Caco-2 (cell line): ENCODE measurements at regions of chr10 and their contacts with region 1.

Region 1: GRCh38 chr10:95430231-95430951 is 130.8 kb downstream of the SORBS1 start:
- DNase-seq: peak; percentile 69 to 76
- H3K4me3 ChIP-seq: no peak overlapping the region
- H3K4me3 Mint-ChIP-seq: no peak overlapping the region
- H3K27ac Mint-ChIP-seq: no peak overlapping the region
- H3K4me1 ChIP-seq: peaks cover 15% of the 10 kb centered on the region
- H3K4me1 Mint-ChIP-seq: no peaks in the 10 kb centered on the region
- H3K27me3 ChIP-seq: no peaks in the 10 kb centered on the region
- H3K27me3 Mint-ChIP-seq: no peaks in the 10 kb centered on the region
- CTCF ChIP-seq: peak; percentile 97 to 98

Region 2: GRCh38 chr10:94706089-94706488 is 724.3 kb before region 1 on chr10:
- CTCF ChIA-PET with region 1: no interaction called
- POLR2A ChIA-PET with region 1: no interaction called
- intact Hi-C with region 1: no loop called
- DNase-seq: no peak
- H3K4me3 ChIP-seq: no peak overlapping the region
- H3K4me3 Mint-ChIP-seq: no peak overlapping the region
- H3K27ac Mint-ChIP-seq: no peak overlapping the region
- H3K4me1 ChIP-seq: no peaks in the 10 kb centered on the region
- H3K4me1 Mint-ChIP-seq: no peaks in the 10 kb centered on the region
- H3K27me3 ChIP-seq: no peaks in the 10 kb centered on the region
- H3K27me3 Mint-ChIP-seq: no peaks in the 10 kb centered on the region
- CTCF ChIP-seq: no peak

Region 3: GRCh38 chr10:95133016-95133752 is 297.2 kb before region 1 on chr10:
- CTCF ChIA-PET with region 1: no interaction called
- POLR2A ChIA-PET with region 1: no interaction called
- intact Hi-C with region 1: loop called (anchors 10 kb)
- DNase-seq: peak; percentile 86 to 89
- H3K4me3 ChIP-seq: no peak overlapping the region
- H3K4me3 Mint-ChIP-seq: no peak overlapping the region
- H3K27ac Mint-ChIP-seq: peak overlapping the region; percentile 53
- H3K4me1 ChIP-seq: peaks cover 22% of the 10 kb centered on the region
- H3K4me1 Mint-ChIP-seq: peaks cover 22% of the 10 kb centered on the region
- H3K27me3 ChIP-seq: no peaks in the 10 kb centered on the region
- H3K27me3 Mint-ChIP-seq: no peaks in the 10 kb centered on the region
- CTCF ChIP-seq: peak; percentile 77 to 94

Region 4: DNA sequence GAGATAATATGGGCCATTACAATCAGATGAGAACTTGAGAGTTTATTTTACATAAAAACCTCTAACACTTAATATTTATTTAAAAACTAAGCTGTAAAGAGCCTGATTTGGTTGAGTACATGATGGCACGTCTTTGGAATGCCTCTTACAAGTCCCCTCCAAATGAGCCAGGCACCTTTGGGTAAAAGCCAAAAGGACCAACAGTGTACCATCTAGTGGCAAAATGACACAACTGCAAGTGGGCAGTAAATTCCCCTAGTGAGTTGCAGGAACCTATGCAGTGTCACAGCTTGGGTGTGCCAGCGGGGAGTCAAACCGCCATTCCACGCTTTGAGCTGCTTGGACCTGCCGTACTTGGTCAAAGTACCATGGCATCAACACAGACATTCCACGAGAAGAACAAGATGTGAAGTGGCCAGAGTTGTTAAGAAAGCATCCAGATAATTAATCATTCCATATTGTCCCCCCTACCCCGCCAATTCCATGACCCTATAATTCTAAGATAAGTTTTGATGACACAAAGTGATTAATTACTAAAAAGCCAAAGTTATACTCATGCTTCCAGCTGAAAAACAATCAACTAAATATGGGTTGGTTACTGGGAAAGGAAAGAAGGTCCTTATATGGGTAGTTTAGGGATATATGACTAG is 15.6 kb after region 1 on chr10:
- CTCF ChIA-PET with region 1: interaction called, 10 read pairs
- POLR2A ChIA-PET with region 1: no interaction called
- intact Hi-C with region 1: no loop called
- DNase-seq: peak; percentile 59 to 61
- H3K4me3 ChIP-seq: no peak overlapping the region
- H3K4me3 Mint-ChIP-seq: no peak overlapping the region
- H3K27ac Mint-ChIP-seq: no peak overlapping the region
- H3K4me1 ChIP-seq: peaks cover 3% of the 10 kb centered on the region
- H3K4me1 Mint-ChIP-seq: peaks cover 13% of the 10 kb centered on the region
- H3K27me3 ChIP-seq: no peaks in the 10 kb centered on the region
- H3K27me3 Mint-ChIP-seq: no peaks in the 10 kb centered on the region
- CTCF ChIP-seq: peak; percentile 82 to 90

Region 5: DNA sequence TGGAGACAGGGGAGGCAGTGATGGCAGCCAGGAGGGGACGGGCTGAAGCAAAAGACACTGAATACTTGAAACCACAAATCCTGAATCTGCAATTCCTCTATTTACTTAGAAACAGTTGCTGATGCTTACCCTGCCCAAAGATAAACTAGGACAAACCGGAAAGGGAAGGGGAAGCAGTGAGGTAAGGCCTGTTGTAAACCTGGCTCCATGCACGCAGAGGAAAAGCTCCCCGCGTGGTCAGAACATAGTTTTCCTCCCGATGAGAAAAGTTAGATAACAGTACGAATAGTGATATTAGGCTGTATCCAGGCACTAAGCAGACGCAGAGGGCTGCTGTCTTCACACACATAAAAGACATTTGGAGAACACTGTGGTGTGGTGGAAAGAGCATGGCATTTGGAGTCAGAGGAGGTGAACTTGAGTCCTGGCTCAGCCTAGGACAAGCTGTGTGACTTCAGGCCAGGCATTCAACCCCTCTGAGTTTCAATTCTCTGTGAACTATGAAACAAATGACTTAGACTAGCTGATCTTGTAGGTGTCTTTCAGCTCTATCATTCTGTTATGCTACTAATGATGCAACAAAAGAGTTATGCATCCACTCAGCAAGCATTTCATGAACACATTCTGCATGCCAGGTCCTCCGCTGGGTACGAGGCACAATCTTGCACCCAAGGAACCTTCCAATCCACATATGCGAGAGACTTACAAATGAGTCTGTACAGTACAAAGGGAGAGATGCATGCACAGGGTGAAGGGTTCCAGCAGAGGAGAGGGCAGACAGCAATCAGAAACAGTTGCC is 49.9 kb after region 1 on chr10:
- CTCF ChIA-PET with region 1: interaction called, 7 read pairs
- POLR2A ChIA-PET with region 1: no interaction called
- intact Hi-C with region 1: loop called (anchors 5 kb)
- DNase-seq: no peak
- H3K4me3 ChIP-seq: no peak overlapping the region
- H3K4me3 Mint-ChIP-seq: peak overlapping the region; percentile 2
- H3K27ac Mint-ChIP-seq: peak overlapping the region; percentile 76
- H3K4me1 ChIP-seq: peaks cover 78% of the 10 kb centered on the region
- H3K4me1 Mint-ChIP-seq: peaks cover 44% of the 10 kb centered on the region
- H3K27me3 ChIP-seq: no peaks in the 10 kb centered on the region
- H3K27me3 Mint-ChIP-seq: no peaks in the 10 kb centered on the region
- CTCF ChIP-seq: no peak

Region 6: GRCh38 chr10:95601116-95601719 is 170.8 kb after region 1 on chr10:
- CTCF ChIA-PET with region 1: interaction called, 40 read pairs
- POLR2A ChIA-PET with region 1: no interaction called
- intact Hi-C with region 1: loop called (anchors 1 kb)
- DNase-seq: peak; percentile 86 to 89
- H3K4me3 ChIP-seq: no peak overlapping the region
- H3K4me3 Mint-ChIP-seq: no peak overlapping the region
- H3K27ac Mint-ChIP-seq: no peak overlapping the region
- H3K4me1 ChIP-seq: 0 out of 2 replicates have a peak, but pooled peaks cover 3% of the 10 kb centered on the region
- H3K4me1 Mint-ChIP-seq: peaks cover 8% of the 10 kb centered on the region
- H3K27me3 ChIP-seq: no peaks in the 10 kb centered on the region
- H3K27me3 Mint-ChIP-seq: no peaks in the 10 kb centered on the region
- CTCF ChIP-seq: peak; percentile 85 to 97